ENCODE measurements at regions of chr12 and their contacts with region 1.

Region 1: DNA sequence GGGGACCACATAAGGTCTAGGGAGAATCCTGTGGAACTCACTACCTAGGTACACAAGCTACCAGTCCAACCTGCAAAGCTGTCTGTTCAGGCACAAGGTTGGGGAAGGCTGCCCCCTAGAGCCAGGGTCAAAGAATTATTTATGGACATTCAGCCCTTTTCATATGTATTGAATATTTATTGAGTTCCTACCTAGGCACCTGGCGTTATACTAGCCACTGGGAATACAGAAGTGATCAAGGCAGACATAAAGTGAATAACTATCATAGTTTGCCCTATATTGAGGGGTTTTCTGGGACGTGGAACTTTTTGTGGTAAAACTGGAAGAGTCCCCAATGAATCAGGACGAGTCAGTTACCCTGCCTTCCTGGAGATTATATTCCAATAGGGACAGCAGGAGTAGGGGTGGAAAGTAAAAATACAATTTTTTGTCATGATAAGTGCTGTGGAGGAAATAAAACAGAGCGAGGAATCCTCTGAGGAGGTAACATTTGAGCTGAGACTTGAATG is 5.8 kb upstream of the SLC48A1 start:
- DNase-seq: peak; percentile 86
- H3K4me3 Mint-ChIP-seq: no peak overlapping the region
- H3K27ac Mint-ChIP-seq: no peak overlapping the region
- H3K4me1 Mint-ChIP-seq: no peaks in the 10 kb centered on the region
- H3K27me3 Mint-ChIP-seq: no peaks in the 10 kb centered on the region

Region 2: GRCh38 chr12:47725893-47726292 is 41.4 kb before region 1 on chr12:
- CTCF ChIA-PET with region 1: interaction called, 837 read pairs
- POLR2A ChIA-PET with region 1: no interaction called
- intact Hi-C with region 1: no loop called
- DNase-seq: no peak
- H3K4me3 Mint-ChIP-seq: no peak overlapping the region
- H3K27ac Mint-ChIP-seq: no peak overlapping the region
- H3K4me1 Mint-ChIP-seq: peaks cover 7% of the 10 kb centered on the region
- H3K27me3 Mint-ChIP-seq: no peaks in the 10 kb centered on the region

Region 3: GRCh38 chr12:47779301-47779942 is 12.2 kb after region 1 on chr12:
- CTCF ChIA-PET with region 1: interaction called, 22 read pairs
- POLR2A ChIA-PET with region 1: interaction called, 3 read pairs
- intact Hi-C with region 1: no loop called
- DNase-seq: peak; percentile 95
- H3K4me3 Mint-ChIP-seq: no peak overlapping the region
- H3K27ac Mint-ChIP-seq: no peak overlapping the region
- H3K4me1 Mint-ChIP-seq: peaks cover 17% of the 10 kb centered on the region
- H3K27me3 Mint-ChIP-seq: no peaks in the 10 kb centered on the region

Region 4: DNA sequence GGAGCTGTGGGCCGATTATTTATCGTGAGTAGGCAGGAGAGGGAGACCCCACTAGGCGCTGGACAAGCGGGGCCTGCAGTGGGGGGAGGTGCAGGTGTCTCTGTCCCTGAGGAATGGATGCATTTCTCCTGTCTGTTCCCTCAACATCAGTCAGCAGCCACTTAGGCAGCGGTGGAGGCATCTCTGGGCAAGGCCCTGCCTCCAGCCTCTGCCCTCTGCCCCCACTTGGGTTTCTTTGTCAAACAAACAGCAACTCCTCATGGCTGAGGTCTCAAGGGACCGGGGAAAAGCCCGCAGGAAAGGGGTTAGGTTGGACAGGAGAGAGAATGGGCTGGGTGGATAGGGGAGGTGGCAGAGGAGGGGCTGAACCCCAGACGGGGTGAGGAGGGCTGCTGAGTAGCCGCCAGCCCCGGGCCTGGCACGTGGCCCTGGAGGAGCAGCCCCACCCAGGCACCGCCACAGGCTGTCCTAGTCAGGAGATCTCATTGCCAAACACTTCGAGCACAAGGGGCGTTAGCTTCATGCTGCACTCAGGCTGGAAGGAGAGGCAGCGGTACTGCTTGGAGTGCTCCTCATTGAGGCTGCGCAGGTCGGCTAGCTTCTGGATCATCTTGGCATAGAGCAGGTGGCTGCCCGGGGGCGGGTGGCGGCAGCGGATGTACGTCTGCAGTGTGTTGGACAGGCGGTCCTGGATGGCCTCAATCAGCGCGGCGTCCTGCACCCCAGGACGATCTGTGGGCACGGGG is 77.2 kb after region 1 on chr12:
- CTCF ChIA-PET with region 1: interaction called, 127 read pairs
- POLR2A ChIA-PET with region 1: no interaction called
- intact Hi-C with region 1: no loop called
- DNase-seq: no peak
- H3K4me3 Mint-ChIP-seq: no peak overlapping the region
- H3K27ac Mint-ChIP-seq: no peak overlapping the region
- H3K4me1 Mint-ChIP-seq: peaks cover 7% of the 10 kb centered on the region
- H3K27me3 Mint-ChIP-seq: no peaks in the 10 kb centered on the region

Measured in activated CD4-positive, alpha-beta memory T cell treated with anti-CD3 and anti-CD28 coated beads for 36 hours (primary cell).